ENCODE measurements at regions of chr22 and their contacts with region 1.

Region 1: GRCh38 chr22:46390652-46391301 is 55.3 kb downstream of the TRMU start:
- DNase-seq: peak; percentile 72 to 88
- ATAC-seq: peak; percentile 82 to 96 (median 88)
- H3K4me3 ChIP-seq: peak overlapping the region; percentile 55
- H3K27ac ChIP-seq: peak overlapping the region; percentile 77
- H3K4me1 ChIP-seq: no peaks in the 10 kb centered on the region
- H3K27me3 ChIP-seq: no peaks in the 10 kb centered on the region
- CTCF ChIP-seq: peak; percentile 58

Region 2: GRCh38 chr22:46355371-46355995 is 35.3 kb before region 1 on chr22:
- intact Hi-C with region 1: loop called in 1 of 2 experiments (anchors 5 kb)
- DNase-seq: peak; percentile 65 to 79
- ATAC-seq: peak; percentile 43 to 55 (median 48)
- H3K4me3 ChIP-seq: no peak overlapping the region
- H3K27ac ChIP-seq: no peak overlapping the region
- H3K4me1 ChIP-seq: peaks cover 9% of the 10 kb centered on the region
- H3K27me3 ChIP-seq: no peaks in the 10 kb centered on the region
- CTCF ChIP-seq: peak; percentile 74

Region 3: GRCh38 chr22:46367707-46368191 is 23.0 kb before region 1 on chr22:
- intact Hi-C with region 1: loop called in 1 of 2 experiments (anchors 1 kb)
- DNase-seq: peak; percentile 69 to 80
- ATAC-seq: peak; percentile 74 to 91 (median 84)
- H3K4me3 ChIP-seq: no peak overlapping the region
- H3K27ac ChIP-seq: no peak overlapping the region
- H3K4me1 ChIP-seq: no peaks in the 10 kb centered on the region
- H3K27me3 ChIP-seq: peaks cover 0 to 22% (median 0%) of the 10 kb centered on the region in 3 donors
- CTCF ChIP-seq: peak; percentile 91

Region 4: DNA sequence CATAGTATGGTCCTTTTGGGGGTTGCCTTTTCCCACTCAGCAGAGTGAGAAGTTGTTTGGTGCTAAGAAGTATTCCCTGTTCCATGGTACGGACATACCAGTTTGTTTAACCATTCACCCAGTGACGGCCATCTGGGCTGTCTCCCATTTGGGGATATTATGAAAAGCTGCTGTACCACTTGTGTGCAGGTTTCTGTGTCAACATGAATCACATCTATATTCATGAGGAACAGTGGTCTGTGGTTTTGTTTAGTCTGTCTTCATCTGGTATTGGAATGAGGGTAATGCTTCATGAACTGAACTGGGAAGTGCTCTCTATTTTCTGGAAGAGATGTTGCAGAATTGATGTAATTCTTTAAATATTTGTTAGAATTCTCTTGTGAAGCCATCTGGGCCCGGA is 34.2 kb after region 1 on chr22:
- intact Hi-C with region 1: no loop called
- DNase-seq: no peak
- ATAC-seq: no peak
- H3K4me3 ChIP-seq: no peak overlapping the region
- H3K27ac ChIP-seq: no peak overlapping the region
- H3K4me1 ChIP-seq: no peaks in the 10 kb centered on the region
- H3K27me3 ChIP-seq: peaks cover 0 to 17% (median 3%) of the 10 kb centered on the region in 3 donors
- CTCF ChIP-seq: no peak

Region 5: GRCh38 chr22:46638601-46639431 is 248.0 kb after region 1 on chr22:
- intact Hi-C with region 1: no loop called
- DNase-seq: no peak
- ATAC-seq: peak in 2 of 4 donors; percentile 6 to 12
- H3K4me3 ChIP-seq: no peak overlapping the region
- H3K27ac ChIP-seq: peak overlapping the region; percentile 41
- H3K4me1 ChIP-seq: peaks cover 48% of the 10 kb centered on the region
- H3K27me3 ChIP-seq: no peaks in the 10 kb centered on the region
- CTCF ChIP-seq: no peak